GM18951 (cell line): ENCODE measurements at regions of chr1 and their contacts with region 1.

Region 1: GRCh38 chr1:236137285-236137852 is 5.0 kb upstream of the GPR137B start:
- POLR2A ChIP-seq: no peak

Region 2: GRCh38 chr1:236281654-236282424 is 144.5 kb after region 1 on chr1 and contains the start of gene ERO1B:
- in situ Hi-C with region 1: loop called (anchors 10 kb)
- POLR2A ChIP-seq: peak; percentile 96